AG04450 (cell line): ENCODE measurements at regions of chr4 and their contacts with region 1.

Region 1: DNA sequence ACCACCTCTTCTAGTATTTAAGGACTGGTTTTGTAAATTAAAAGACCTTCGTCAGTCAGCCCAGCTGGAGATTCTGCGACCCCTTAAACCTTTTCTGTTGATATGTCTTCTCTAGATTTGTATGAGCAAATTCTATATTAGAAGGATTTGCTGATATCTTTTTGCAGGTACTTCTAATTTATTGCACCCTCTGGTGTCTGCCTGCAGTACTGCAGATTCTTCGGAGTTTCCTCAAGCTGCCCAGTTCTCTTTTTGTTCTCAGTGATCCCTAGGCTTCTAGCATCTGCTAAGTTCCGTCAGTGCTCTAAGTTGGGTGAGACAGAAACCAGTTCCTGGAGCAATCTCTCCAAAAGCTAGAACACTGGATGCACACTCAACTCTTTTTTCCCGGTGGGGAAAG is 545.2 kb downstream of the C4orf33 start:
- DNase-seq: no peak
- H3K4me3 ChIP-seq: no peak overlapping the region
- H3K27ac ChIP-seq: no peak overlapping the region
- H3K27me3 ChIP-seq: no peaks in the 10 kb centered on the region
- CTCF ChIP-seq: peak; percentile 56

Region 2: DNA sequence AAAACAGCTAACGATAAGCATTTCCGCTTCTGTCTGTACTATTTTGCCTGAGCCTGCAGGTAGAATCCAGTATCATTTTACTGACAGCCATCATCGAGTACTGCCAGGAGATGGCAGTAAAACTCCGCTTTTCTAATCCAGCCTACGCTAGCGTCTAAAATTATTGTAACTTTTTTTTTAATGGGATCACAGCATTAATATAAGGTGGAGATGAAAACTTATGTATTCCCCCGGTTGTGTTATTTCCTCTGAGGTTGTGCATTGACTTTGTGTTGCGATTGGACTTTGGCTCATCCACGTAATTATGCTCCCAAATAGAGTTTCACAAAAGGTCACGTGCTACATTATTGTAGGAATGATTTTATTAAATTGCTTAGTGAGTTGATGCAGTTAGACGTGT is 297.1 kb before region 1 on chr4:
- CTCF ChIA-PET with region 1: interaction called, 14 read pairs
- POLR2A ChIA-PET with region 1: no interaction called
- DNase-seq: no peak
- H3K4me3 ChIP-seq: no peak overlapping the region
- H3K27ac ChIP-seq: no peak overlapping the region
- H3K27me3 ChIP-seq: no peaks in the 10 kb centered on the region
- CTCF ChIP-seq: peak; percentile 72

Region 3: GRCh38 chr4:129362674-129363274 is 278.4 kb before region 1 on chr4:
- CTCF ChIA-PET with region 1: interaction called, 41 read pairs
- POLR2A ChIA-PET with region 1: no interaction called
- DNase-seq: peak; percentile 37
- H3K4me3 ChIP-seq: no peak overlapping the region
- H3K27ac ChIP-seq: no peak overlapping the region
- H3K27me3 ChIP-seq: no peaks in the 10 kb centered on the region
- CTCF ChIP-seq: peak; percentile 83